ENCODE measurements at regions of chr17 and their contacts with region 1.

Region 1: GRCh38 chr17:50541716-50542688 is 5.0 kb upstream of the SPATA20 start:
- DNase-seq: peak; percentile 81
- ATAC-seq: peak; percentile 69
- H3K4me3 ChIP-seq: peak overlapping the region; percentile 73 to 87 (median 78)
- H3K27ac ChIP-seq: peak overlapping the region; percentile 97
- H3K4me1 ChIP-seq: peaks cover 80% of the 10 kb centered on the region
- H3K27me3 ChIP-seq: no peaks in the 10 kb centered on the region; a peak in 1 of 5 replicates
- CTCF ChIP-seq: peak; percentile 54; the same call in 1 of the 2 replicates
- EP300 ChIP-seq: 0 out of 4 replicates have a peak, but pooled peaks of 1 of the 2 experiments have one; percentile 5
- POLR2A ChIP-seq: peak; percentile 90
- RAD21 ChIP-seq: peak; percentile 69; the same call in 1 of the 2 replicates

Region 2: GRCh38 chr17:50318501-50319285 is 223.3 kb before region 1 on chr17:
- CTCF ChIA-PET with region 1: no interaction called
- POLR2A ChIA-PET with region 1: no interaction called
- in situ Hi-C with region 1: no loop called
- intact Hi-C with region 1: no loop called
- DNase-seq: no peak
- ATAC-seq: no peak
- H3K4me3 ChIP-seq: no peak overlapping the region
- H3K27ac ChIP-seq: no peak overlapping the region
- H3K4me1 ChIP-seq: no peaks in the 10 kb centered on the region
- H3K27me3 ChIP-seq: peaks cover 10 to 38% of the 10 kb centered on the region in 2 experiments
- CTCF ChIP-seq: no peak
- EP300 ChIP-seq: no peak
- POLR2A ChIP-seq: no peak
- RAD21 ChIP-seq: no peak

Region 3: GRCh38 chr17:50507871-50508572 is 34.0 kb before region 1 on chr17 and contains the start of gene MYCBPAP:
- CTCF ChIA-PET with region 1: no interaction called
- POLR2A ChIA-PET with region 1: interaction called, 13 read pairs
- in situ Hi-C with region 1: no loop called
- intact Hi-C with region 1: no loop called
- DNase-seq: no peak
- ATAC-seq: no peak
- H3K4me3 ChIP-seq: no peak within 1 kb of the TSS
- H3K27ac ChIP-seq: no peak within 1 kb of the TSS
- H3K4me1 ChIP-seq: peaks cover 46% of the 10 kb centered on the region
- H3K27me3 ChIP-seq: peaks cover 0 to 8% of the 10 kb centered on the region in 2 experiments; a peak in 2 of 5 replicates
- CTCF ChIP-seq: no peak
- EP300 ChIP-seq: no peak
- POLR2A ChIP-seq: no peak
- RAD21 ChIP-seq: no peak
- total RNA-seq, gene MYCBPAP: 0.24 and 0.36 TPM in 2 replicates

Region 4: GRCh38 chr17:50518384-50519230 is 23.4 kb before region 1 on chr17:
- CTCF ChIA-PET with region 1: no interaction called
- POLR2A ChIA-PET with region 1: interaction called, 37 read pairs
- in situ Hi-C with region 1: no loop called
- intact Hi-C with region 1: no loop called
- DNase-seq: peak; percentile 68
- ATAC-seq: peak; percentile 90
- H3K4me3 ChIP-seq: peak overlapping the region; percentile 21 to 68 (median 40)
- H3K27ac ChIP-seq: no peak overlapping the region
- H3K4me1 ChIP-seq: peaks cover 59% of the 10 kb centered on the region
- H3K27me3 ChIP-seq: no peaks in the 10 kb centered on the region
- CTCF ChIP-seq: no peak
- EP300 ChIP-seq: peak in 1 of 2 experiments; percentile 21; a peak in 1 of 4 replicates
- POLR2A ChIP-seq: no peak; a peak in 1 of 4 replicates
- RAD21 ChIP-seq: 0 out of 2 replicates have a peak, but pooled peaks have one; percentile 32

Region 5: DNA sequence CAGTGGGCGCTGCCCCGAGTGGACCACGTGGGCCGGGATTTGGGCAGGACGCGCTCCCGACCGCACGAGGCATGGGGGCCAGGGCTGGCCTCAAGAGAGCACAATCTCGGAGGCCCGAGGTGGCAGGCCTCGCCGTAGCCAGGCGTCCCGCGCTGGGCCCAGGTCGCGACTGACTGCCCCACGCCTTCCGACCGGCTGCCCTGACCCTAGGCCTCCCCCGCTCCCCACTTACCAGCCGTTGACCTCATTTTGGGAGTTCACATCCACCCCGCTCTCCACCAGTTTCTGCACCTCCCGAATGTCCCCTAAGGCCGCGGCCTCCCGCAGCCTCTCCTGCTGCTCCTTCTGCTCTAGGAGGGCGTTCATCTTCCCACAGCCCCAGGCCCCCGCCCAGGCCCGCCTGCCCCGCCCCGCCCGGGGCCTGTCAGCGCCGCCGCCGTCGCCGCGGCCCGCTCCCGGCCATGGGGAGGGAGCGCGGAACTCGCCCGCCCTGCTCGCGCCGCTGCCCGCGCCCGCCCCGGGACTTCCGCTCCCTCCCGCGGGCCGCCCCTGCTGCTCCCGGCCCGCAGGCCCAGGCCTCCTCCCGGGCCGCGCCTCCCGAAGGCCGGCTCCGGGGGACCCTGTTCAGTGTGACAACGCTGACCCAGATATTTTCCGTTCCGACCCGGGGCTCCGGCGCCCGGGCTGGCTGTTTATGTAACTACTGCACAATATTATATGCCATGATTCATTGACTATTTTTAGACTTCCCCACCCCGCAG is 165.5 kb after region 1 on chr17 and contains the start of gene ANKRD40:
- CTCF ChIA-PET with region 1: no interaction called
- POLR2A ChIA-PET with region 1: interaction called, 10 read pairs
- in situ Hi-C with region 1: no loop called
- intact Hi-C with region 1: no loop called
- DNase-seq: peak; percentile 88
- ATAC-seq: peak; percentile 82
- H3K4me3 ChIP-seq: peak within 1 kb of the TSS; percentile 87 to 92 (median 88)
- H3K27ac ChIP-seq: peak within 1 kb of the TSS; percentile 91
- H3K4me1 ChIP-seq: peaks cover 56% of the 10 kb centered on the region
- H3K27me3 ChIP-seq: no peaks in the 10 kb centered on the region; a peak in 1 of 5 replicates
- CTCF ChIP-seq: no peak
- EP300 ChIP-seq: peak; percentile 69 to 75
- POLR2A ChIP-seq: peak; percentile 59 to 65; a peak in 3 of 4 replicates
- RAD21 ChIP-seq: peak; percentile 55
- total RNA-seq, gene ANKRD40: 46.4 and 52.4 TPM in 2 replicates